ENCODE measurements at regions of chr2 and their contacts with region 1.

Region 1: DNA sequence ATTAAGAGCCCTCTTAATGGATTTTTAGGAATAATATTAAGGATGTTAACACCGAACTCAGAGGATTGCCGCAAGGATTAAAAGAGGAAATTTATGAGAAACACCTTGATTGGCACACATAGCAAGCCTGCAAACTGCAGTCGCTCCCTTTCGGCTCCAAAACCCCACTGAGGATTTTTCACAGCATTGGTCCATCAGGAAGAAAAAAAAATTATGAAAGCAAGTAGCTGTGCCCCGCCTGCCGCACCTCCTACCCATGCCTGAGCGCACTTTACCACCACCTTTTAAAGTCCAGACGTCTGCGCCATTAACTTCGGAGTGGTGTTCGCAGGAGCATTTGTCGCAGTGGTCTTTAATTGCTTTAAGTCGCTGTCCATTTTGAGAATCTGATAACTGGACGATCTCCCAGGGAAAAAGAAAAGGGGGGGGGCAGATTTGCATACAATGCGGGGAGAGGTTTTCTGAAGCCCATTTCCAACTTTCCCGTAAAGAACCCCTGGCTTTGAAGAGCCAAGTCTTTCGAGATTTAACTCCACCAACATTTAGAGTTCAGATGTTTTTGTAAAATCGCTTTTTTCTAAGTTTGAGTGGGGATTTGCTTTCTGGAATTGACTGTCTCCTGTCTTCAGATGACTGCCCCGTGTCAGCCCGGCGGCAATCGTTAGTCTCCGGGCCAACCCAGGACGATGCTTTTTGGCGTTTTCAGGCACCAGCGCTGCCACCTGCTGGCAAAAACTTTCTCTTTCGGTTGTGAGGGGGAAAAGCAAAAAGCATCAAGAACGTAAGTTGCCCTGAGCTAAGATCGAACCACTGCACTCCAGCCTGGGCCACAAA is 914 bp upstream of the TRABD2A start:
- DNase-seq: peak; percentile 75
- ATAC-seq: peak; percentile 75
- H3K4me3 Mint-ChIP-seq: peak overlapping the region; percentile 94
- H3K27ac Mint-ChIP-seq: peak overlapping the region; percentile 93
- H3K4me1 Mint-ChIP-seq: peaks cover 40% of the 10 kb centered on the region
- H3K27me3 Mint-ChIP-seq: no peaks in the 10 kb centered on the region
- CTCF ChIP-seq: no peak

Region 2: GRCh38 chr2:84144345-84144744 is 737.5 kb before region 1 on chr2:
- CTCF ChIA-PET with region 1: no interaction called
- POLR2A ChIA-PET with region 1: no interaction called
- intact Hi-C with region 1: no loop called
- DNase-seq: no peak
- ATAC-seq: no peak
- H3K4me3 Mint-ChIP-seq: no peak overlapping the region
- H3K27ac Mint-ChIP-seq: no peak overlapping the region
- H3K4me1 Mint-ChIP-seq: no peaks in the 10 kb centered on the region
- H3K27me3 Mint-ChIP-seq: no peaks in the 10 kb centered on the region
- CTCF ChIP-seq: no peak

Region 3: DNA sequence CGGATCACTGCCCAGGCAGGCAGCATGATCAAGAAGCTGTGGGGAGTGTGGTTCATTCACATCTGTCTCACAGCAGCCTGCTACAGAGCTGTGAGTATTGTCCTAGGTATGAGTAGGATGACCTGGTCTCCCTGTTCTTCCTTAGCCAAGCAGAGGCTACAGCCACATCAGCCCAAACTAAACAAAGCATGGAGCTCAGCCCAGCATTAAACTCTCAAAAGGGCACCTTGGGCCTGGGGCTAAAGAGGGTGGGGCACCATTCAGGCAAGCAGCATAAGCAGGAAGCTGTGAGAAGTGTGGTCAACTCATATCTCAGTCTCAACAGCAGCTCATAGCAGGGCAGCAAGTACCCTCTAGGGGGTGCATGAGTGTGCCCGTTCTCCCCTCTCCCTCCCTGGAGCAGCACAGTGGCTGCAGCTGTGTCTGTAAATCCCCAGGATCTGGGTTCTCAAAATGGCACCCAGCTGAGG is 140.5 kb before region 1 on chr2:
- CTCF ChIA-PET with region 1: interaction called, 10 read pairs
- POLR2A ChIA-PET with region 1: no interaction called
- intact Hi-C with region 1: loop called (anchors 1 kb)
- DNase-seq: no peak
- ATAC-seq: peak; percentile 90
- H3K4me3 Mint-ChIP-seq: no peak overlapping the region
- H3K27ac Mint-ChIP-seq: no peak overlapping the region
- H3K4me1 Mint-ChIP-seq: peaks cover 5% of the 10 kb centered on the region
- H3K27me3 Mint-ChIP-seq: peaks cover 13% of the 10 kb centered on the region
- CTCF ChIP-seq: no peak

Region 4: DNA sequence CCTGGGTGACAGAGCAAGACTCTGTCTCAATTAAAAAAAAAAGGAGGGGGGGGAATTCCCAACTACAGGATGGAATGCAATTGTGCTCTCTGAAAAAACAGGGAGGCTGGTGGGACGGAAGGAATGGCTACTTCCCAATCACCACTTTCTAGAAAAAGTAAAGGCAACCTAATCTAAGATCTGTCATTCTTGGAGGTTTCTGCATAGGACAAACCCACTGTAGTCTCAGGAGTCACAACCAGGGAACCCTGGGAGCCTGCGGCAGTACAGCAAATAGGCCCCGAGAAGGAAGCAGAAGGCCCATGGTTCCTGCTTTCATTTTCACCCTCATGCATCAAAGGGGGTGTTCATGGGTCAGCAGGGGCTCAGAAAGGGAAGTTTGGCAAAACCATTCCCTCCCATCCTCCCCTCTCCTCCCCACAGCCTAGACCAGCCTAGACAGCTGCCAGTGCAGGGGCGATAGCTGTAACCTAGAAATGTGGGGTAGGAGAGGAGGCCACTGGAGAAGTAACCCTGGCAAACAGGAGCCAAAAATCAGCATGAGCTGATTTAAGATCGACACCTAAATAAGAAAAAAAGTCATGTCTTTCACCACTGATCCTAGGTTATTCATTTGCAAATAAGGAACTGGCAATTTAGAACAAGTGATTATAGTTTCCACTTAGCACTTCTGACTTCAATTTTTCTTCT is 48.9 kb before region 1 on chr2:
- CTCF ChIA-PET with region 1: interaction called, 4 read pairs
- POLR2A ChIA-PET with region 1: interaction called, 3 read pairs
- intact Hi-C with region 1: loop called (anchors 5 kb)
- DNase-seq: peak; percentile 25
- ATAC-seq: peak; percentile 89
- H3K4me3 Mint-ChIP-seq: peak overlapping the region; percentile 58
- H3K27ac Mint-ChIP-seq: peak overlapping the region; percentile 84
- H3K4me1 Mint-ChIP-seq: peaks cover 25% of the 10 kb centered on the region
- H3K27me3 Mint-ChIP-seq: no peaks in the 10 kb centered on the region
- CTCF ChIP-seq: no peak

Region 5: DNA sequence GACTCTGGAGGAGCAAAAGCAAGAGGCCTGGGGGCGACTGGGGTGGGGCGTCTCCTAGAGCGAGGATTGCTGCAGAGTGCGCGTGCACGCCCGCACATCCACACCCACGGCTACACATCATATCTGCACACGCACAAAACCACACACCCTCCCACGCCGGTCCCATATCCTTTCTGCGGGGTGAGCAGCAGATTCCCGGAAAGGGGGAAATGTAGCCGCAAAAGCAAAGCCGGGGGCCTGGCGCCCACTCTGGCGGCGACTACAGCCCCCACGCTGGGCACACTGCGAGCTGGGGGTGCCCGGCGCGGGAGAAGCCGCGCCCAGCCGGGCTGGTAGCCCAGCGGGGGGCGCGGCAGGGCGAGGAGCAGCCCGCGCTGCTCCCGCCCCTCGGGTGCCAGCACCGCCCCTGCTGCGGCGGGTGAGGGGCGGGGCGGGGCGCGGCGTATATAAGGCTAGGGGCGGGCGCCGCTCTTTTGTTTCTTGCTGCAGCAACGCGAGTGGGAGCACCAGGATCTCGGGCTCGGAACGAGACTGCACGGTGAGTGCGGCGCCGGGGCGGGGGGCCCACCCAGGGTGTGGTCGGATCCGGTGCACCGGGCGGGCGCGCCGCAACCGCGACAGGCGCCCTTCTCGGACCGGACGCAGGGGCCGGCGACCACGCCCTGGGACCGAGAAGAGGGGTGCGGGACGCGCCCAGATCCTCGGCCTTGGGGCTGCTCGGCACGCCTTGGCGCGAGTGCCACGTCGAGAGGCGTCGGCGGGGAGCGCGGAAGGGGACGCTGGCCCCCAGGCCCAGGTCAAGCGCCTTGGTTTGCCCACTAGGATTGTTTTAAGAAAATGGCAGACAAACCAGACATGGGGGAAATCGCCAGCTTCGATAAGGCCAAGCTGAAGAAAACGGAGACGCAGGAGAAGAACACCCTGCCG is 23.6 kb after region 1 on chr2 and contains the start of gene TMSB10:
- CTCF ChIA-PET with region 1: interaction called, 32 read pairs
- POLR2A ChIA-PET with region 1: interaction called, 85 read pairs
- intact Hi-C with region 1: loop called (anchors 1 kb)
- DNase-seq: peak; percentile 94
- ATAC-seq: peak; percentile 84
- H3K4me3 Mint-ChIP-seq: peak within 1 kb of the TSS; percentile 93
- H3K27ac Mint-ChIP-seq: peak within 1 kb of the TSS; percentile 87
- H3K4me1 Mint-ChIP-seq: peaks cover 55% of the 10 kb centered on the region
- H3K27me3 Mint-ChIP-seq: no peaks in the 10 kb centered on the region
- CTCF ChIP-seq: no peak
- total RNA-seq, gene TMSB10: 925 and 1,069 TPM in 2 replicates

Region 6: GRCh38 chr2:85017411-85018048 is 135.7 kb after region 1 on chr2:
- CTCF ChIA-PET with region 1: no interaction called
- POLR2A ChIA-PET with region 1: no interaction called
- intact Hi-C with region 1: loop called (anchors 2 kb)
- DNase-seq: no peak
- ATAC-seq: no peak
- H3K4me3 Mint-ChIP-seq: no peak overlapping the region
- H3K27ac Mint-ChIP-seq: peak overlapping the region; percentile 11
- H3K4me1 Mint-ChIP-seq: peaks cover 61% of the 10 kb centered on the region
- H3K27me3 Mint-ChIP-seq: no peaks in the 10 kb centered on the region
- CTCF ChIP-seq: no peak

Region 7: DNA sequence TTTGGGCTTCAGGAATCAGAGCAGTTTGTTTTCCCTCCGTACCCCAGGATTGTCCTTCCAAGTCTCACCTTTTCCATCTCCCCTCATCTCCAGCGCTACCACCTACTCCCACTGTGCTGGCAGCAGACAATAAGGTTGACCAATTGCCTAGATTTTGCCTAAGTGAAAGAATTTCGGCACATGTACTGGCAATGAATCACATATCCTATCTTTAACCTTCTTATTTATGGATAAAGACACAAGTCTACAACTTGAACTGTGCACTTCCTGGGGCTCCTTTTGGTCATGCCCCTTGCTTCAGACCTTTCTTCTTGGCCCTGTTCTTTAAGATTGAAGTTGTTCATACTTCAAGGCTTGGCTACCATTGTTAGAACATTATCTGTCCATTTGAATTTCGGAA is 160.5 kb after region 1 on chr2:
- CTCF ChIA-PET with region 1: no interaction called
- POLR2A ChIA-PET with region 1: no interaction called
- intact Hi-C with region 1: no loop called
- DNase-seq: no peak
- ATAC-seq: no peak
- H3K4me3 Mint-ChIP-seq: no peak overlapping the region
- H3K27ac Mint-ChIP-seq: no peak overlapping the region
- H3K4me1 Mint-ChIP-seq: peaks cover 3% of the 10 kb centered on the region
- H3K27me3 Mint-ChIP-seq: no peaks in the 10 kb centered on the region
- CTCF ChIP-seq: no peak

Region 8: GRCh38 chr2:86368161-86368824 is 1486.5 kb after region 1 on chr2:
- CTCF ChIA-PET with region 1: no interaction called
- POLR2A ChIA-PET with region 1: no interaction called
- intact Hi-C with region 1: no loop called
- DNase-seq: peak; percentile 22
- ATAC-seq: peak; percentile 84
- H3K4me3 Mint-ChIP-seq: peak overlapping the region; percentile 35
- H3K27ac Mint-ChIP-seq: no peak overlapping the region
- H3K4me1 Mint-ChIP-seq: peaks cover 11% of the 10 kb centered on the region
- H3K27me3 Mint-ChIP-seq: no peaks in the 10 kb centered on the region
- CTCF ChIP-seq: no peak

Measured in activated B cell treated with CpG ODN at 0.5 μM for 24 hours (primary cell).